ENCODE measurements at regions of chr17 and their contacts with region 1.

Region 1: DNA sequence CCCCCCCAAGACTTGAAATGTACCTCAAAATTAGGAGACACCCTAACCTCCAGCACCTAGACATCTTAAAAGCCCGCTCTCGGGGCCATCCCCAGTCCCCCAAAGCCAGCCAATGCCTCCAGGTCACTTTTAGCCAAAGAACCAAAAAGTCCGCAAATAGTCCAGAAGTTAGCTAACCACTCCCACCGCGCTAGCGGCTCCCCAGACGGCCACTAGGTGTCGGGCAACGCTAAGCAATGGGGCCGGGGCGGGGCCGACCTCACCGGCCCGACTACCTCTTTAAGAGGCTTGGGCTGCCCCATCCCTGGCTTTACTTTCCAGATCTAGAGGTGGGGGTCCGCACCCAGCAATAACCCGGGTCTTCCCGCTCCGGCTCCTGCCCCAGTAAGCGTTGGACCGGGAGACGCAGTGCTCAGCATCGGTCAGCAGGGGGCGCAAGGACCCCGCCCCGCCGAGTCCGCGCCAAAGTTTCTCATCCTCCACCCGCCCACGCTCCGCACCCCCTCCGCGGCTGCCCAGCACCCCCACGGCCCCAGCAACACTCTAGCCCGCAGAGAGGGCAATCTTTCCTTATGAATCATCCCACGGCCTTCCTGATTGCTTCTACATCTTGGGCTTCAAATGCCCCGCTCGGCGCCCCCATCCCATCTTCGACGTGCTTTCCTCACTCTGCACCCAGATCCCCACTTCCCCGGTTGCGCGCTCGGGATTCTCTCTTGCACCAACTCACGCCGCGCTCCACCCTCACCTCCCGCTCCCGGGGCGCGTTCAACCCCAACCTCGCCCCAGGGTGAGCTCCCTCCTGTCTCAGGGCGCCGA is 765 bp downstream of the COL1A1 start:
- DNase-seq: peak; percentile 94
- ATAC-seq: peak; percentile 82

Region 2: GRCh38 chr17:50169121-50169764 is 31.4 kb before region 1 on chr17:
- intact Hi-C with region 1: loop called (anchors 1 kb)
- DNase-seq: peak; percentile 72
- ATAC-seq: peak; percentile 11

Region 3: GRCh38 chr17:50272711-50273653 is 72.3 kb after region 1 on chr17:
- intact Hi-C with region 1: loop called (anchors 1 kb)
- DNase-seq: peak; percentile 83
- ATAC-seq: peak; percentile 49

Region 4: GRCh38 chr17:50297407-50297865 is 96.8 kb after region 1 on chr17:
- intact Hi-C with region 1: loop called (anchors 1 kb)
- DNase-seq: peak; percentile 88
- ATAC-seq: peak; percentile 86